Left ventricle myocardium superior (tissue), 1 donor: ENCODE measurements at regions of chr1 and their contacts with region 1.

Region 1: DNA sequence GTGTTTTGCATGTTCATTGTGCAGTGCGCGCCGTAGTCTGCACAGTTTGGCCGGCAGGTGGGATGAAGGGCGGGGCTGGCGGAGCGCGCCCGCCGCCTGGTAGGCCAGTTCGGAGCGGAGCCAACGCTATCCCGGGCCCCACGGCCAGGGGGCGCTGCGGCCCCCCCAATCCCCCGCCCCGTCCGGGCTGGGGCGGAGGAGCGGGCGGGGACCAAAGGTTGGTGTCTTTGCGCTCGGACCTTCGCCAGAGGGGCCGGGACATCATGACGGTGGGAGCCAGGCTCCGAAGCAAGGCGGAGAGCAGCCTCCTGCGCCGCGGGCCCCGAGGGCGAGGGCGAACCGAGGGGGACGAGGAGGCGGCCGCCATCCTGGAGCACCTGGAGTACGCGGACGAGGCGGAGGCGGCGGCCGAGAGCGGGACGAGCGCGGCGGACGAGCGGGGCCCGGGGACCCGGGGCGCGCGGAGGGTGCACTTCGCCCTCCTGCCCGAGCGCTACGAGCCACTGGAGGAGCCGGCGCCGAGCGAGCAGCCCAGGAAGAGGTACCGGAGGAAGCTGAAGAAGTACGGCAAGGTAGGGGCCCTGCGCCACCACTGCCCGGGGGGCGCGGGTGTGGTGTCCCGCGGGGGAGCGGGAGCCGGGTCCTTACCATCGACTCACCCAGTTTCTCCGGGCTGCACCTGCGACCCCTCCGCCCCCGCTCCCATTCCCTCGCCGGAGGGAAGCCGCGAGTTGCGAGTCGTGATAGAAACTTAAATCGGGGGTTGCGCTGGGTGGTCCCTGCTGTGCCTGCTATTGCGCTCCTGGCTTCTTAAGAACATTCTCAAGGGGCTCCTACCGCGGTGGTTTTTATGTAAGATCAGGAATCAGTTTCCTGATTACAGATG is at the start of gene C1orf115:
- DNase-seq: peak; percentile 90
- ATAC-seq: peak; percentile 98
- total RNA-seq, gene C1orf115: 22.7 TPM

Region 2: GRCh38 chr1:220380885-220381284 is 309.5 kb before region 1 on chr1:
- intact Hi-C with region 1: no loop called
- DNase-seq: no peak
- ATAC-seq: no peak

Region 3: DNA sequence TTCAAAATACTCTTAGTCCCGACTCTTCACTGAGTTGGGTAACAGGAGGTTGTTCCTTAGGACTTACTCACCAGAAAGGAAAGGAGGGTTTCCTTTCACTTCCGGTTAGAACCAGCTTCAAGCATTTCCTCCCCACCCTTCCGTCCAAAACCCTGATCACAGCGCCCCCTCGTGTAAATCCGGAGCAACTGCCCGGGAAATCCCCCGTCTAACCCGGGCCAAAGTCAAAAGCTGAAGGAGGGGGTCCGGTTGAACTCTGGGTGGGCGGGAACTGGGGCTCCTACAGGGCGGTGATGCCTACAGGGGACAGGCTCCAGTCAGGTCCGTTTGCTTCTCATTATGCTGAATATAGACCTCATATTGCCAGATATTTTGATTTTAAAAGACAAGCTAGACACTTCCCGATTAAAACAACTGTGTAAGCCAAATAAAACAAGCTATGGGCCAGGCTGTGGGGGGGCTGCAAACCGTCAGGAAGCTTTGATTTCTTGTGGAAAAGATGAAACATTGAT is 42.8 kb after region 1 on chr1:
- intact Hi-C with region 1: loop called (anchors 5 kb)
- DNase-seq: peak; percentile 72
- ATAC-seq: peak; percentile 94

Region 4: DNA sequence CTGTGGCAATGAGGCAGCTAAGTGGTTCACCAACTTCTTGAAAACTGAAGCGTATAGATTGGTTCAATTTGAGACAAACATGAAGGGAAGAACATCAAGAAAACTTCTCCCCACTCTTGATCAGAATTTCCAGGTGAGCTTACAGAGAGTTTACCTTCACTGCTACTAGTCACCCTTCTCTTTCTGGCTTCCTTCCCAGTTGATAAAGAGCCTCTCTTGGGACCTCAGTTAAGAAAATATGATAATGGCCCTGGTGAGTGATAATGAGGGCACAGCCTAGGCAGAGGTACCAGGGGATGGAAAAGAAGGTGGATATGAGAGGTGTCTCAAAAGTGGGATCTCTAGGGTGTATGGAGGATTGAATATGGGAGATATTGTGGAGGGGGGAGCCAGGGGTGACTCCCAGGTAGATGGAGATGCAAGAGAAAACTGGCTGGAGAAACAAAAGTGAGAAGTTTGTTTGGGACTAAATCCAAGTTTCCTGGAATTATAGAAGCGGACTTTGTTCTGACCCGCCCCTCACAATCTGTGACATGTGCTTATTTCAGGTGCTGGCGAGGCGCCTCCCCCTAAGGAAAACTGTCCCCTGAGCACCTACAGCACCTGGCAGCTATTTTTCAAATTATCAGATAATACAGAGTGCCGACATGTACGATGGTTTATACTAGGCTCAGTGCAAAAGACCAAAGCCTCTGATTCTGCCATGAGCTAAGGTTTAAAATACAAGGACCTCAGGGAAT is 71.5 kb after region 1 on chr1:
- intact Hi-C with region 1: no loop called
- DNase-seq: no peak
- ATAC-seq: no peak

Region 5: GRCh38 chr1:221013691-221014660 is 323.6 kb after region 1 on chr1:
- intact Hi-C with region 1: no loop called
- DNase-seq: no peak
- ATAC-seq: no peak